H1 (cell line): ENCODE measurements at regions of chr16 and their contacts with region 1.

Region 1: DNA sequence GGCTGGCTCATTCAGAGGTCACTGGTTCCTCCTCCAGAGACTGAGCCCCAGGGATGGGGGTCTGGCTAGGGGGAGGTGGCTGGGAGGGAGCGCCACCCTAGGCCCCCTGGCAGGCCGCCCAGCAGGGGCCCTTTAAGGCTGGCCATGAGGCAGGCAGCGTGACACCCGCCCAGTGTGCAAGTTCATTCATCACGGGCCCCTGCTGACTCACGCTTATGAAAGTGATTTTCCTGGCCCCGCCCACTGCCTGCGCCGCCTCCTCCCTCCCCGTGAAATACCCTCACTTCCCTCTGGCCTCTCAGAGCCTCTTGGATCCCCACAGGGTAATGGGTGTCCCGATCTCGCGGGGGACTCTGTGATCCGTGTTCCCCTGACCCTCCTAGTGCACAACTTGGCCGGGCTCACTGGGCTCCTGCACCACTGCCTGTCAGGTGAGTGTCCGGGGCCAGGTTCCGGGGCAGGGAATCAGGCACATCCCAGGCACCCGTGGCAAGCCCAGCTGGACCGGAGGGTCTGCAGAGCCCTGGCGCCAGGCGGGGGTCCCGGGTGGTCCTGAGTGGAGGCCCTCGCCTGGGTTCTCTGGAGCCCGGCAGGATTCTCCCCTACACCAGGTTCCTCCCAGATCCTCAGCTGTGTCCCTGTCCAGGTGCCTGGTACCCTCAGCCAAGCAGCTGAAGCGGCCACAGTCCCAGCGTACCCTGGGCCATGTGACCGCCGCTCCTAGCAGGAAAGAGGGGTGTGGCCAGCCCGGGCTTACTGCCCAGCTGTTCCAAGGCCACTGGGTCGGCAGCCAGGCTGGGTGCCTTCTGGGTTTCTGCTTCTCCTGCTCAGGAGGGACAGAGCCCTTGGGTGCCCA is at the start of gene OSGIN1:
- DNase-seq: peak in 1 of 2 experiments; percentile 72
- H3K4me3 ChIP-seq: peak within 1 kb of the TSS; percentile 4 to 47 (median 14); a peak in 6 of 8 replicates
- H3K27ac ChIP-seq: no peak within 1 kb of the TSS
- H3K4me1 ChIP-seq: peaks cover 2 to 7% (median 4%) of the 10 kb centered on the region in 4 experiments; a peak in 6 of 7 replicates
- H3K27me3 ChIP-seq: no peaks in the 10 kb centered on the region
- CTCF ChIP-seq: no peak
- EP300 ChIP-seq: no peak
- POLR2A ChIP-seq: no peak
- RAD21 ChIP-seq: no peak
- total RNA-seq, gene OSGIN1: 0.48 and 0.58 TPM in 2 replicates

Region 2: GRCh38 chr16:83926726-83927397 is 26.3 kb before region 1 on chr16:
- CTCF ChIA-PET with region 1: interaction called, 13 read pairs
- POLR2A ChIA-PET with region 1: interaction called, 3 read pairs
- DNase-seq: peak; percentile 84 to 98
- H3K4me3 ChIP-seq: peak overlapping the region; percentile 16 to 57 (median 40); a peak in 7 of 8 replicates
- H3K27ac ChIP-seq: peak overlapping the region; percentile 67; the same call in 1 of the 2 replicates
- H3K4me1 ChIP-seq: peaks cover 0 to 6% (median 3%) of the 10 kb centered on the region in 4 experiments; a peak in 4 of 7 replicates
- H3K27me3 ChIP-seq: 0 out of 7 replicates have a peak, but pooled peaks cover 0 to 6% (median 0%) of the 10 kb centered on the region in 4 experiments
- CTCF ChIP-seq: peak; percentile 83 to 96 (median 96)
- EP300 ChIP-seq: no peak
- POLR2A ChIP-seq: peak in 1 of 2 experiments; percentile 61; a peak in 2 of 3 replicates
- RAD21 ChIP-seq: peak; percentile 68 to 76

Region 3: DNA sequence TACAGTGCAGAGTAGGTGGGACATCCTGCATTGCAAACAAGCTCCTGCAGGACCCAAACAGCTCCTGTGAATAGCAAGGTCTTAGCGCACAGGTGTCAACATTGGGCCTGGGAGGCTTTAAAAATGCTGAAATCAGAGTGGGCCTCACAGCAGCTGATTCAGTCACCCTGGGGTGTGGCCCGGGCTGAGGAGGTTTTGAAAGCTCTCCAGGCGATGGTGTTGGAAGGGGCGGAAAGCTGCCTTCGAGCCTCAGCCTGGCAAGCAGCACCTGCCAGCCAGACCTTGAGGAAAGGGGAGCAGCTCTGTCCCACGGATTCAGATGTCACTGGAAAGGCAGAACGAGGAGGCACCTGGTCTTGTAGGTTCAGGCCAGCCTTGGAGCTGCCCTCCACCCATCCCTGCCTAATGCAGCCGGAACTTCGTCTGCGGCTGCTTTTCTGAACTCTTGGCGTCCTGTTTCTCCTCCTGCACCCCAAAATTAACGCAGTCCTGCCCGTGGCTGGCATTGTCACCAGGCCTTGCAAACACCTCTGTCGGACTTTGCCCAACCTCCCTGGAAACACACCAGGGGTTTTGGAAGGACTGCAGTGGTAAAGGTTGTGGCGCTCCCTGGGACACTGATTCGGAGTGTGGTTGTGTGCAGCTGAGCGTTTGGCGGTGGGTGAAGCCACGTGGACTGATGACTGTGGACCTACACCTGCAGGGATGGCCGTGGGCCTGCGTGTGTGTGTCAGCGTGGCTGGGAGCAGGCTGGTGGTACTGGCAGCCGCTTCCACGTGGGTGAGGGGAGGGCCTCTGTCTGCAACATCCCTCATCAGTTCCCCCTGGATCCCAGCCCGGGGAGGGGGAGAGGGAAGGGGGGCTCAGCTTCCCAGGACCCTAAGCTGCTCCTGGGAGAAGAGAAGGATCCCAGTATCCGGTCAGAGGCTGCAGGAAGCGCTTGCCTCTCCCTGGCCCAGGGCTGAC is 18.3 kb after region 1 on chr16:
- CTCF ChIA-PET with region 1: interaction called, 47 read pairs
- POLR2A ChIA-PET with region 1: no interaction called
- DNase-seq: no peak
- H3K4me3 ChIP-seq: no peak overlapping the region
- H3K27ac ChIP-seq: no peak overlapping the region
- H3K4me1 ChIP-seq: peaks cover 0 to 11% (median 8%) of the 10 kb centered on the region in 4 experiments; a peak in 6 of 7 replicates
- H3K27me3 ChIP-seq: peaks cover 0 to 13% (median 9%) of the 10 kb centered on the region in 4 experiments; a peak in 6 of 7 replicates
- CTCF ChIP-seq: no peak
- EP300 ChIP-seq: no peak
- POLR2A ChIP-seq: no peak
- RAD21 ChIP-seq: no peak

Region 4: GRCh38 chr16:83994087-83994486 is 40.9 kb after region 1 on chr16:
- CTCF ChIA-PET with region 1: interaction called, 11 read pairs
- POLR2A ChIA-PET with region 1: no interaction called
- DNase-seq: no peak
- H3K4me3 ChIP-seq: no peak overlapping the region
- H3K27ac ChIP-seq: no peak overlapping the region
- H3K4me1 ChIP-seq: peaks cover 2 to 12% (median 7%) of the 10 kb centered on the region in 4 experiments; a peak in 5 of 7 replicates
- H3K27me3 ChIP-seq: no peaks in the 10 kb centered on the region
- CTCF ChIP-seq: no peak
- EP300 ChIP-seq: no peak
- POLR2A ChIP-seq: no peak
- RAD21 ChIP-seq: no peak

Region 5: GRCh38 chr16:84024854-84025253 is 71.7 kb after region 1 on chr16:
- CTCF ChIA-PET with region 1: interaction called, 10 read pairs
- POLR2A ChIA-PET with region 1: no interaction called
- DNase-seq: no peak
- H3K4me3 ChIP-seq: no peak overlapping the region
- H3K27ac ChIP-seq: no peak overlapping the region
- H3K4me1 ChIP-seq: peaks cover 0 to 4% (median 0%) of the 10 kb centered on the region in 4 experiments; a peak in 2 of 7 replicates
- H3K27me3 ChIP-seq: no peaks in the 10 kb centered on the region
- CTCF ChIP-seq: no peak
- EP300 ChIP-seq: no peak
- POLR2A ChIP-seq: no peak
- RAD21 ChIP-seq: no peak

Region 6: DNA sequence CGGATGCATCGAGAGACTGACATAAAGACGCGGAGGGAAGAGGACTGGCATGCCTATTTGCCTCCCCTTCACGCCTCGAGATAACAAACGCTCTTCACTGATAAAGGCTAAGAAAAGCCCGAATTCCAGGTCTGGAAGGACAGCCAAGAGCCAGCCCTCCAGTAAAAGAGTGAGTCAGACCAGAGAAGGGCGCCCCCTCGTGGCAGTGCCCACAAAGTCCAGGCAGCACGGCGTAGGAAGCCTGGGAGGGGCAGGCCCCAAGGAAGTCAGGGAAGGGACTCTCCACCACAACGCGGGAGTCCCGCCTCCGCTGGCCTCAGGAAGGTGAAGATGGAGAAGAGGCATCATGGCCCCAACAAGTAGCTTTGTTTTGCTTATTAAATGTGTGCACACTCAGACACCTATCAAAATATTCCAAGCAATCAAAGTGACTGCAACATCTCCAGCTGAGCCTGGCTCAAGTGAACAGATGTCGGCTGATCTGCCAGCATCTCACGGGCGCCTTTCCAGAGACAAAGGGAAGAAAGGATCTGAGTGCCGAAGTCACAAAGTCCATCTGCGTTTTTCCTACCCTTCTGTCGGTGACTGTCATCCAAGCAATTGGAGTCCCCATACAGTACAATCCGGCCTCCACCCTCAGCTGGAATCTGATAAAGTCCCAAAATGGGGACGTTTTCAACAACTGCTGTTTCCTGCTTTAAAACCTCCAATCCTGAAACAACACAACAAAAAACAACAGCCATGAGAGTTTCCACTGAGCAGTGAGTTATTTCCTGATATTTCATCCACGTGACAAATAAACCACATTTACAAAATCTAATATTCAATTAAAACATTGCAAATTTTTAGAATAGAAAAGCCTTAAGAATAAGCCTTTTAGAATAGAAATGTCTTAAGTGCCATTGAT is 109.8 kb after region 1 on chr16:
- CTCF ChIA-PET with region 1: interaction called, 366 read pairs
- POLR2A ChIA-PET with region 1: no interaction called
- DNase-seq: peak; percentile 75 to 98
- H3K4me3 ChIP-seq: no peak overlapping the region
- H3K27ac ChIP-seq: no peak overlapping the region
- H3K4me1 ChIP-seq: no peaks in the 10 kb centered on the region
- H3K27me3 ChIP-seq: no peaks in the 10 kb centered on the region
- CTCF ChIP-seq: peak; percentile 93 to 96 (median 96)
- EP300 ChIP-seq: no peak
- POLR2A ChIP-seq: no peak
- RAD21 ChIP-seq: peak; percentile 72 to 77